ENCODE measurements at regions of chr4 and their contacts with region 1.

Region 1: GRCh38 chr4:59689149-59689548 is 1511.0 kb upstream of the ADGRL3 start:
- DNase-seq: no peak
- H3K4me3 ChIP-seq: no peak overlapping the region
- H3K27ac ChIP-seq: no peak overlapping the region
- H3K4me1 ChIP-seq: no peaks in the 10 kb centered on the region
- H3K27me3 ChIP-seq: no peaks in the 10 kb centered on the region
- CTCF ChIP-seq: no peak
- POLR2A ChIP-seq: no peak

Region 2: GRCh38 chr4:57971261-57971660 is 1717.9 kb before region 1 on chr4:
- intact Hi-C with region 1: loop called (anchors 5 kb)
- DNase-seq: no peak
- H3K4me3 ChIP-seq: no peak overlapping the region
- H3K27ac ChIP-seq: no peak overlapping the region
- H3K4me1 ChIP-seq: no peaks in the 10 kb centered on the region
- H3K27me3 ChIP-seq: no peaks in the 10 kb centered on the region
- CTCF ChIP-seq: no peak
- POLR2A ChIP-seq: no peak

Region 3: DNA sequence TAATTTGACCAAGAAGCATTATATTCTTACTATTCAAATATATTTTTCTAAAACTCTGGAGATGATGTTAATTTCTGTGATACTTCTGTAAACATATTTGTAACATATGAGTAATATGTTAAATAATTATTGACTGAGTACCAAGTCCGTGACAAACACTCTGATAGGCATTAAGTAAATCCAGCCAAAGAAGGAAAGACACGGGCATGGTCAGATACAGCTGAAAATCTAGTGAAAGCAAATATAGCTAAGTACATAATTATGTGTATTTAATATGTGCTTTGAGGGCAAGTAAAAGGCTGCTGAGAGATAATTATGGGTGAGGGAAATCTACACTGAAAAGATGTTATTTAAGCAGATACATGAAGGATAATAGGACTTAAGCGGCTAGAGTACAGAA is 247.4 kb after region 1 on chr4:
- intact Hi-C with region 1: no loop called
- DNase-seq: no peak
- H3K4me3 ChIP-seq: no peak overlapping the region
- H3K27ac ChIP-seq: no peak overlapping the region
- H3K4me1 ChIP-seq: no peaks in the 10 kb centered on the region
- H3K27me3 ChIP-seq: no peaks in the 10 kb centered on the region
- CTCF ChIP-seq: no peak
- POLR2A ChIP-seq: no peak